Tibial artery (tissue), 4 donors: ENCODE measurements at regions of chr10 and their contacts with region 1.

Region 1: GRCh38 chr10:124267231-124267885 is 151.4 kb downstream of the OAT start:
- DNase-seq: peak in 1 of 2 donors; percentile 81
- H3K4me3 ChIP-seq: no peak overlapping the region
- H3K27ac ChIP-seq: peak overlapping the region; percentile 25 to 45
- H3K4me1 ChIP-seq: peaks cover 0 to 17% (median 3%) of the 10 kb centered on the region in 4 donors
- H3K27me3 ChIP-seq: no peaks in the 10 kb centered on the region
- CTCF ChIP-seq: no peak

Region 2: GRCh38 chr10:124025660-124026588 is 241.4 kb before region 1 on chr10:
- intact Hi-C with region 1: loop called (anchors 10 kb)
- DNase-seq: peak in 1 of 2 donors; percentile 79
- H3K4me3 ChIP-seq: no peak overlapping the region
- H3K27ac ChIP-seq: peak overlapping the region in 1 of 2 donors; percentile 61
- H3K4me1 ChIP-seq: peaks cover 0 to 23% (median 17%) of the 10 kb centered on the region in 4 donors
- H3K27me3 ChIP-seq: no peaks in the 10 kb centered on the region
- CTCF ChIP-seq: peak; percentile 68 to 77